Activated naive CD8-positive, alpha-beta T cell treated with anti-CD3 and anti-CD28 coated beads, Interleukin-2, amount 10 ng/mL, durations not matched to agents 7 days and 5 days (primary cell): ENCODE measurements at regions of chr3 and their contacts with region 1.

Region 1: GRCh38 chr3:98556164-98557130 is 24.7 kb downstream of the GPR15 start:
- DNase-seq: peak; percentile 50
- ATAC-seq: peak; percentile 91
- H3K4me3 Mint-ChIP-seq: peak overlapping the region; percentile 91
- H3K27ac Mint-ChIP-seq: peak overlapping the region; percentile 93
- H3K4me1 Mint-ChIP-seq: peaks cover 70% of the 10 kb centered on the region
- H3K27me3 Mint-ChIP-seq: no peaks in the 10 kb centered on the region

Region 2: GRCh38 chr3:98531622-98532274 is 24.7 kb before region 1 on chr3 and contains the start of gene GPR15:
- POLR2A ChIA-PET with region 1: interaction called, 10 read pairs
- DNase-seq: no peak
- ATAC-seq: peak; percentile 35
- H3K4me3 Mint-ChIP-seq: peak within 1 kb of the TSS; percentile 61
- H3K27ac Mint-ChIP-seq: peak within 1 kb of the TSS; percentile 66
- H3K4me1 Mint-ChIP-seq: peaks cover 36% of the 10 kb centered on the region
- H3K27me3 Mint-ChIP-seq: no peaks in the 10 kb centered on the region
- total RNA-seq, gene GPR15: 40.6 to 44.1 TPM

Region 3: GRCh38 chr3:98540346-98540745 is 16.1 kb before region 1 on chr3:
- POLR2A ChIA-PET with region 1: interaction called, 30 read pairs
- DNase-seq: no peak
- ATAC-seq: peak; percentile 68
- H3K4me3 Mint-ChIP-seq: peak overlapping the region; percentile 57
- H3K27ac Mint-ChIP-seq: peak overlapping the region; percentile 85
- H3K4me1 Mint-ChIP-seq: peaks cover 54% of the 10 kb centered on the region
- H3K27me3 Mint-ChIP-seq: no peaks in the 10 kb centered on the region

Region 4: DNA sequence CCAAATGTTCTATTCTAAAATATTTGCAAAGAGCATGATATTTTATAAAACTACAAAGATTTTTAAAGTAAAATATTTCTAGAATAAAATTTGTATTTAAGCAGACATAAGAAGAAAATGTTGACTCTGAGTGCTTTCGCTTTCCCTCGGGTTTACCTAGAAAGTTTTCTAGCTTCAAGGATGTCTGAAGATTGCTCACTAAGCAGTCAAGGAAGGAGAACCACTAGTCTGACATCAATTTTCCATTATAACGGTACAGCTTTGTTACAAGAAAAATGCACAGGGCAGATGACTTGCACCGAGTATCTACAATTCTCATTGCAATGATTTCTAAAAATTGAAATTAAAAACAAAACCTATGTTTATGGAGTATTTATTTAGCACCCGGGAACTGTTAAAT is 10.5 kb before region 1 on chr3:
- POLR2A ChIA-PET with region 1: interaction called, 30 read pairs
- DNase-seq: no peak
- ATAC-seq: peak; percentile 72
- H3K4me3 Mint-ChIP-seq: peak overlapping the region; percentile 82
- H3K27ac Mint-ChIP-seq: peak overlapping the region; percentile 92
- H3K4me1 Mint-ChIP-seq: peaks cover 59% of the 10 kb centered on the region
- H3K27me3 Mint-ChIP-seq: no peaks in the 10 kb centered on the region

Region 5: DNA sequence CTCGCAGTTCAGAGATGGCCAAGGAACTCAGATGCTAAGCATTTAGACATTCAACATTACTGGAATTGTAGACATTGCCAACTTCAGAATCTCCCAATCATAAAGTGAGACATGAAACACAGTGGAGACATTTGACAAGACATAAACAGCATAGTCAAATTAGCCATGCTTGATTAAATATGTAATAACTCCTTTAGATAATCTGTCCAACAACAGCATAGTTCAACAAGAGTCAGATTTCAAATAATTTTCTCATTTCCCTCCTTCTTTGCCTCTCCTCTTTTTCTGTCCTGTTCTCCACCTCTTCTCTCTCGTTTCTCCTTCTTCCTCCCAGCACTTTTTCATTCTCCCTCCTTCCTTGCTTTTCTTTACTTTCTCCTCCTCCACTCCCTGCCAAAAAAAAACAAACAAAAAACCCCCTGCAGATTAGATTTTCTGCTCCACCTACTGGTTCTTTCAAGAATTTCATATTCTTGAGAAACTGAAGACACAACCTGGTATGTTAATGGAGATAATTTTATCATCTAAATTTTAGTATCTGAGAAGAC is 16.8 kb after region 1 on chr3:
- POLR2A ChIA-PET with region 1: interaction called, 22 read pairs
- DNase-seq: no peak
- ATAC-seq: peak; percentile 37
- H3K4me3 Mint-ChIP-seq: peak overlapping the region; percentile 52
- H3K27ac Mint-ChIP-seq: peak overlapping the region; percentile 81
- H3K4me1 Mint-ChIP-seq: peaks cover 42% of the 10 kb centered on the region
- H3K27me3 Mint-ChIP-seq: no peaks in the 10 kb centered on the region